Heart left ventricle (tissue), 16 donors: ENCODE measurements at regions of chr2 and their contacts with region 1.

Region 1: GRCh38 chr2:200624658-200625057 is 38.8 kb downstream of the AOX1 start:
- DNase-seq: no peak
- ATAC-seq: no peak
- H3K4me3 ChIP-seq: no peak overlapping the region
- H3K27ac ChIP-seq: no peak overlapping the region
- H3K4me1 ChIP-seq: no peaks in the 10 kb centered on the region
- H3K27me3 ChIP-seq: no peaks in the 10 kb centered on the region
- CTCF ChIP-seq: no peak
- POLR2A ChIP-seq: no peak

Region 2: GRCh38 chr2:200515155-200515554 is 109.5 kb before region 1 on chr2:
- intact Hi-C with region 1: no loop called
- DNase-seq: no peak
- ATAC-seq: no peak
- H3K4me3 ChIP-seq: no peak overlapping the region
- H3K27ac ChIP-seq: no peak overlapping the region
- H3K4me1 ChIP-seq: peaks cover 0 to 7% (median 1%) of the 10 kb centered on the region in 12 donors
- H3K27me3 ChIP-seq: no peaks in the 10 kb centered on the region
- CTCF ChIP-seq: no peak
- POLR2A ChIP-seq: no peak

Region 3: GRCh38 chr2:200695191-200695590 is 70.5 kb after region 1 on chr2:
- intact Hi-C with region 1: loop called in 1 of 10 experiments (anchors 5 kb)
- DNase-seq: peak in 3 of 5 donors; percentile 20 to 67 (median 60)
- ATAC-seq: peak; percentile 64 to 82 (median 73)
- H3K4me3 ChIP-seq: no peak overlapping the region
- H3K27ac ChIP-seq: no peak overlapping the region
- H3K4me1 ChIP-seq: peaks cover 0 to 12% (median 0%) of the 10 kb centered on the region in 12 donors
- H3K27me3 ChIP-seq: no peaks in the 10 kb centered on the region
- CTCF ChIP-seq: no peak
- POLR2A ChIP-seq: no peak